ENCODE measurements at regions of chr3 and their contacts with region 1.

Region 1: GRCh38 chr3:65732051-65732935 is 306.4 kb downstream of the MAGI1 start:
- DNase-seq: peak in 1 of 2 donors; percentile 48
- ATAC-seq: peak in 2 of 3 donors; percentile 64 to 78
- H3K4me3 ChIP-seq: no peak overlapping the region
- H3K4me3 Mint-ChIP-seq: no peak overlapping the region
- H3K27ac ChIP-seq: no peak overlapping the region
- H3K27ac Mint-ChIP-seq: no peak overlapping the region
- H3K4me1 ChIP-seq: no peaks in the 10 kb centered on the region
- H3K4me1 Mint-ChIP-seq: peaks cover 0 to 4% of the 10 kb centered on the region in 2 donors
- H3K27me3 ChIP-seq: no peaks in the 10 kb centered on the region
- H3K27me3 Mint-ChIP-seq: no peaks in the 10 kb centered on the region
- CTCF ChIP-seq: peak; percentile 46

Region 2: DNA sequence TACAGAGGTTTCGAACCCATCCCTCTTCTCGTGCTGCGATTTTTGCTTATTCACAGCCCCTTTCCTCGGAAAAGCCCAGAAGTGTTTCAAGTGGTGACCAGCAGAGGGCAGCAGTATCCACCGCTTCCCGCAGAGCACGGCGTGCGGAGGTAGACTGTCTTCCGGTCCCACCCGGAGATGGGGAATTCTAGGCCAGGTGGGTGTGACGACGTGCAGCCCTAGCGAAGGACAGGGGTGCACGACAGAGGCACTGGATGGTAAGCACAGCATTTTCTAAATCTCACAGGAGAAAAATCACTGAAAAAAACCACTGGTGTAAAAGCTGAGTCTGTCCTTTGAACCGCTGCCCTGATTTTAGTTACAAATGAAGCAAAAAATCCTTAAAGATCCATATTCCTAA is 1701.6 kb before region 1 on chr3:
- intact Hi-C with region 1: loop called (anchors 10 kb)
- DNase-seq: peak; percentile 52 to 94
- ATAC-seq: peak; percentile 90 to 99 (median 98)
- H3K4me3 ChIP-seq: peak overlapping the region; percentile 5
- H3K4me3 Mint-ChIP-seq: peak overlapping the region; percentile 86
- H3K27ac ChIP-seq: no peak overlapping the region
- H3K27ac Mint-ChIP-seq: peak overlapping the region in 1 of 2 donors; percentile 59
- H3K4me1 ChIP-seq: peaks cover 7% of the 10 kb centered on the region
- H3K4me1 Mint-ChIP-seq: peaks cover 0 to 4% of the 10 kb centered on the region in 2 donors
- H3K27me3 ChIP-seq: peaks cover 10% of the 10 kb centered on the region
- H3K27me3 Mint-ChIP-seq: peaks cover 37 to 57% of the 10 kb centered on the region in 2 donors
- CTCF ChIP-seq: peak; percentile 80

Region 3: GRCh38 chr3:64533617-64534317 is 1198.5 kb before region 1 on chr3:
- intact Hi-C with region 1: loop called (anchors 5 kb)
- DNase-seq: peak in 1 of 2 donors; percentile 29
- ATAC-seq: peak in 2 of 3 donors; percentile 49 to 57
- H3K4me3 ChIP-seq: no peak overlapping the region
- H3K4me3 Mint-ChIP-seq: no peak overlapping the region
- H3K27ac ChIP-seq: no peak overlapping the region
- H3K27ac Mint-ChIP-seq: no peak overlapping the region
- H3K4me1 ChIP-seq: no peaks in the 10 kb centered on the region
- H3K4me1 Mint-ChIP-seq: no peaks in the 10 kb centered on the region
- H3K27me3 ChIP-seq: no peaks in the 10 kb centered on the region
- H3K27me3 Mint-ChIP-seq: no peaks in the 10 kb centered on the region
- CTCF ChIP-seq: no peak

Region 4: GRCh38 chr3:65713016-65713415 is 19.3 kb before region 1 on chr3:
- intact Hi-C with region 1: no loop called
- DNase-seq: no peak
- ATAC-seq: no peak
- H3K4me3 ChIP-seq: no peak overlapping the region
- H3K4me3 Mint-ChIP-seq: no peak overlapping the region
- H3K27ac ChIP-seq: no peak overlapping the region
- H3K27ac Mint-ChIP-seq: no peak overlapping the region
- H3K4me1 ChIP-seq: no peaks in the 10 kb centered on the region
- H3K4me1 Mint-ChIP-seq: no peaks in the 10 kb centered on the region
- H3K27me3 ChIP-seq: no peaks in the 10 kb centered on the region
- H3K27me3 Mint-ChIP-seq: no peaks in the 10 kb centered on the region
- CTCF ChIP-seq: no peak

Region 5: DNA sequence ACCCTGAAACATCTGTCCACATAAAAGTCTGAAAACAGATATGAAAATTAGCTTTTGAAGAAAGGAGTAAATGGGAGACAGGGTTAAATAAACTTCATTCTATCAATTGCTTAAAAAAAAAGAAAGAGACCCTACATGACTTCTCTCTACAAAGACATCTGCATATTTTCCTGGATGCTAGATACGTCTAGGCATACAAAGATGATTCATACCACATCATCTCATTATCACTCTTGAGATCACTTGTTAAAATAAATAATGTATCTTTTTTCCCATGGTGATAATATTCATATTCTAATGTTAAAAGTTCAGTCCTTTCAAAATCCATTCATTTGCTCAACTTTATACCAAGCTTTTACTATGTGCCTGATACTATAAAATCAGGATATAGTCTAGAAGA is 10.6 kb after region 1 on chr3:
- intact Hi-C with region 1: no loop called
- DNase-seq: no peak
- ATAC-seq: no peak
- H3K4me3 ChIP-seq: no peak overlapping the region
- H3K4me3 Mint-ChIP-seq: no peak overlapping the region
- H3K27ac ChIP-seq: no peak overlapping the region
- H3K27ac Mint-ChIP-seq: no peak overlapping the region
- H3K4me1 ChIP-seq: no peaks in the 10 kb centered on the region
- H3K4me1 Mint-ChIP-seq: no peaks in the 10 kb centered on the region
- H3K27me3 ChIP-seq: no peaks in the 10 kb centered on the region
- H3K27me3 Mint-ChIP-seq: no peaks in the 10 kb centered on the region
- CTCF ChIP-seq: no peak

Region 6: GRCh38 chr3:65936908-65937638 is 204.8 kb after region 1 on chr3:
- intact Hi-C with region 1: no loop called
- DNase-seq: no peak
- ATAC-seq: peak in 1 of 3 donors; percentile 57
- H3K4me3 ChIP-seq: no peak overlapping the region
- H3K4me3 Mint-ChIP-seq: no peak overlapping the region
- H3K27ac ChIP-seq: no peak overlapping the region
- H3K27ac Mint-ChIP-seq: no peak overlapping the region
- H3K4me1 ChIP-seq: no peaks in the 10 kb centered on the region
- H3K4me1 Mint-ChIP-seq: peaks cover 0 to 7% of the 10 kb centered on the region in 2 donors
- H3K27me3 ChIP-seq: no peaks in the 10 kb centered on the region
- H3K27me3 Mint-ChIP-seq: no peaks in the 10 kb centered on the region
- CTCF ChIP-seq: no peak

Measured in natural killer cell (primary cell).